ENCODE measurements at regions of chr4 and their contacts with region 1.

Region 1: DNA sequence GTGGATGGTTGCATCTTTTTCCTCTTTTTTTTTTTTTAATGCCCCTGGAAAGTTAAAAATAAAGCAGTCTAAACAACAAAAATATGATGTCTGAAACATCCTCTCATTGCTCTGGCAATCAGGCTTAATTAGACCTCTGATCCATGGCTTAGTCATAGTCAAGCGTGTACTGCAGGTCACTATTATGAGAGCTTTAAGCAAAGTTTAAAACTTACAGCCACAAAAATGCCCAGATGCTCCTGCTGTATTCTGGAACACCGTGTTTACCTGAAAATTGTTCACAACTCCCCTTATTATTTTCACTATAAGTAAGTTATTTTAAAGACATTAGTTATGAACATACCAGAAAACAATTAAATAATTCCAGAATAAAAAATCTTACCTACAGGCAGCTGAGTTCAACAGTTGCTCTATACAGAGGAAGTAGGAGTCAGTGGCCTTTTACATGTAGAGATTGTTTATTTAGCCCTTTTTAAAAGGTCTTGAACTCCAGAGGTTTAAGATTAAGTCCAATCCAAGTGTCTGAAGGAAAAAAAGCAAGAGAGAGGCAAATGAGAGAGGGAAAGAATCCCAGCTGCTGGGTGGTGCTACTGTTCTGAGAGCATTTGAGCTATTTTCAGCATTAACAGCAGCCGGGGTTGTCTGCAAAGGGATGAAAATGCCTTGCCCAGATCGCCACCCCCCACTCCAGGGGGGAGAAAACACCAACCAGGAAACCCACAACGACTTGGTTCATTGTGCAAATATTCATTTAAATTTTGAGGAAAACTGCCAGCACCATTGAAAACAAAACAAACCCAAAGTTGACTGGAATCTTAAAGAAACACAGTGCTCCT is 36.9 kb downstream of the SORBS2 start:
- DNase-seq: peak; percentile 74 to 77
- ATAC-seq: peak; percentile 72
- H3K4me3 ChIP-seq: peak overlapping the region; percentile 71 to 93
- H3K27ac ChIP-seq: peak overlapping the region in 1 of 2 donors; percentile 69
- H3K4me1 ChIP-seq: peaks cover 1 to 11% of the 10 kb centered on the region in 2 donors
- H3K27me3 ChIP-seq: no peaks in the 10 kb centered on the region

Region 2: GRCh38 chr4:185656467-185656931 is 118.6 kb before region 1 on chr4:
- intact Hi-C with region 1: loop called (anchors 5 kb)
- DNase-seq: peak; percentile 80 to 87
- ATAC-seq: peak; percentile 88
- H3K4me3 ChIP-seq: peak overlapping the region; percentile 68 to 75
- H3K27ac ChIP-seq: peak overlapping the region in 1 of 2 donors; percentile 77
- H3K4me1 ChIP-seq: peaks cover 3 to 4% of the 10 kb centered on the region in 2 donors
- H3K27me3 ChIP-seq: no peaks in the 10 kb centered on the region

Region 3: DNA sequence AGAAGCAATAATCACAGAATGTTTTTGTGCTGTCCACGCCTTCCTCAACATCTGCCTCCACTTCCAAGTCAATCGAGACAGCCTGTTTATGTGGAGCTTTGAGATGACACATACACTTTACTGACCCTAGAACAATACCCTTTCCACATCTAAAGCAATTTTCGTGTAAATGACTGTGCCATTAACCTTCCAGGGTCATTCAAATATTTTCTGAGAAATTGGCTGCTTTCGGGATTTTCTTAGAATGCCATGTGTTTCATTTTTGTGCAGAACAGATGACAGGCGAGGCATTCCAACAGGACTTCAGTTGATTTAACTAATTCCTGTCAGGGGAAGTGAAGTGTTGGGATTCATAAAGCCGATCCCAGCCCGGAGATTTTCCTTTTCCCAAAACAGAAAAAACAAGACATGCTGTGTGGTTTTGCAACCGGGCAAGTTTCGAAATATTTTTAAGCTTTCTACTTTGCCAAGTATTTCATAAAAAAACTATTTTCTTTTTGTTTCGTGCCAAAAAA is 37.0 kb before region 1 on chr4:
- intact Hi-C with region 1: loop called (anchors 5 kb)
- DNase-seq: no peak
- ATAC-seq: peak; percentile 74
- H3K4me3 ChIP-seq: no peak overlapping the region
- H3K27ac ChIP-seq: peak overlapping the region; percentile 54 to 81
- H3K4me1 ChIP-seq: peaks cover 1 to 6% of the 10 kb centered on the region in 2 donors
- H3K27me3 ChIP-seq: no peaks in the 10 kb centered on the region

Region 4: DNA sequence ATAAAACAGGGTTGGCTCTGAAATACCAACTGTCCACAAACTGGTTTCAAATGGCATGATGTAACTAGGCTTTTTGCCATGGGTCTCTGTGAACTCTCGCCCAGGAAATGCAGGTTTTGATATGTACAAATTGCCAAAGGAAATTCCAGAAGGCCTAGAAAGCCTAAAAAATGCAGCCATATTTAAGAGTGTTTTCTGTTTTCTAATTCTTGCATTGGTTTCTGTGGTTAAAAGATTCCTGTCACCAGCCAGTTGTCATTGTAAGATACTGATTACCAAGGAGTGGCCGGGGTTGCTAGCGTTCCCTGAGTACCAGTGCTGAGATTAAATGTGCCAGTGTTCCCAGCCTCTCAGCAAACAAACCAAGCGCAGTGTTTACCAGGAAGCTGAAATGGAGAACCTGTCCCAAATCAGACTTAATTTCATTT is 90.9 kb after region 1 on chr4:
- intact Hi-C with region 1: loop called in 1 of 2 experiments (anchors 10 kb)
- DNase-seq: no peak
- ATAC-seq: no peak
- H3K4me3 ChIP-seq: no peak overlapping the region
- H3K27ac ChIP-seq: peak overlapping the region; percentile 6 to 56
- H3K4me1 ChIP-seq: peaks cover 0 to 9% of the 10 kb centered on the region in 2 donors
- H3K27me3 ChIP-seq: no peaks in the 10 kb centered on the region

Region 5: GRCh38 chr4:186021461-186022167 is 246.6 kb after region 1 on chr4:
- intact Hi-C with region 1: loop called (anchors 10 kb)
- DNase-seq: no peak
- ATAC-seq: peak; percentile 75
- H3K4me3 ChIP-seq: peak overlapping the region in 1 of 2 donors; percentile 35
- H3K27ac ChIP-seq: no peak overlapping the region
- H3K4me1 ChIP-seq: peaks cover 0 to 3% of the 10 kb centered on the region in 2 donors
- H3K27me3 ChIP-seq: no peaks in the 10 kb centered on the region

Region 6: GRCh38 chr4:186037182-186037581 is 262.1 kb after region 1 on chr4:
- intact Hi-C with region 1: no loop called
- DNase-seq: no peak
- ATAC-seq: no peak
- H3K4me3 ChIP-seq: no peak overlapping the region
- H3K27ac ChIP-seq: no peak overlapping the region
- H3K4me1 ChIP-seq: peaks cover 0 to 1% of the 10 kb centered on the region in 2 donors
- H3K27me3 ChIP-seq: no peaks in the 10 kb centered on the region